Posterior cingulate gyrus (tissue), 11 donors: ENCODE measurements at regions of chr5 and their contacts with region 1.

Region 1: DNA sequence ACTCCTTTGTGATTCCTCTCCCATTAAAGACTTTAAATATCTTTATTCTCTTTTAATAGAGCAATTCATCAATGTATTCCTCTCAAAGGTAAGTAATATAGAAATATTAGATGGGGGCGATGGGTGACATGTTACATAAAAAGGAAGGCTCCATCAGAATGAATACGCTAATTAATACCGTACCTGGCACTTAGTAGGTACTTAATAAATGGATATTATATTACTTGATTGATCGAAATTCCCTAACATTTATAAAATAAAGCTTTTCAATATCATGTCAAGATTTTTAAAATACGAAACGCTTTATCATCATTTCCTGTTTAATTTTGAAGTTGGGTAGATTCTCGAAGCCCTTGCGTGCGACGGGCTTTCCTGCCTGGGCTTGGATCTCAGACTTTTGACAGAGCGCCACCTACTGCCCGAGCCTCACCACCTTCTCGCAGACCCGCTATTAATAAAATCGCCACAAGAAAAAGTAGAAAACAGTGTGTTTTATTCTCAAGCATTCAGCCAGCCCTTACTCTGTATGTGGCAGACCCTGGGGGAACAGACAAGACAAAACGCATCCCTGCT is 99.4 kb downstream of the C5orf15 start:
- DNase-seq: peak; percentile 52 to 96 (median 76)

Region 2: GRCh38 chr5:133754575-133755169 is 114.4 kb before region 1 on chr5:
- intact Hi-C with region 1: loop called (anchors 5 kb)
- DNase-seq: peak in 2 of 10 donors; percentile 23 to 36